Right cardiac atrium (tissue), 5 donors: ENCODE measurements at regions of chr2 and their contacts with region 1.

Region 1: GRCh38 chr2:70616168-70616694 is 62.6 kb upstream of the TGFA start:
- DNase-seq: no peak
- ATAC-seq: peak in 1 of 2 donors; percentile 29
- H3K4me3 ChIP-seq: no peak overlapping the region
- H3K27ac ChIP-seq: no peak overlapping the region
- H3K4me1 ChIP-seq: peaks cover 2% of the 10 kb centered on the region
- H3K27me3 ChIP-seq: no peaks in the 10 kb centered on the region

Region 2: GRCh38 chr2:70340921-70341765 is 275.1 kb before region 1 on chr2:
- intact Hi-C with region 1: loop called (anchors 2 to 10 kb)
- DNase-seq: no peak
- ATAC-seq: peak; percentile 54 to 61
- H3K4me3 ChIP-seq: no peak overlapping the region
- H3K27ac ChIP-seq: no peak overlapping the region
- H3K4me1 ChIP-seq: no peaks in the 10 kb centered on the region
- H3K27me3 ChIP-seq: peaks cover 3% of the 10 kb centered on the region

Region 3: DNA sequence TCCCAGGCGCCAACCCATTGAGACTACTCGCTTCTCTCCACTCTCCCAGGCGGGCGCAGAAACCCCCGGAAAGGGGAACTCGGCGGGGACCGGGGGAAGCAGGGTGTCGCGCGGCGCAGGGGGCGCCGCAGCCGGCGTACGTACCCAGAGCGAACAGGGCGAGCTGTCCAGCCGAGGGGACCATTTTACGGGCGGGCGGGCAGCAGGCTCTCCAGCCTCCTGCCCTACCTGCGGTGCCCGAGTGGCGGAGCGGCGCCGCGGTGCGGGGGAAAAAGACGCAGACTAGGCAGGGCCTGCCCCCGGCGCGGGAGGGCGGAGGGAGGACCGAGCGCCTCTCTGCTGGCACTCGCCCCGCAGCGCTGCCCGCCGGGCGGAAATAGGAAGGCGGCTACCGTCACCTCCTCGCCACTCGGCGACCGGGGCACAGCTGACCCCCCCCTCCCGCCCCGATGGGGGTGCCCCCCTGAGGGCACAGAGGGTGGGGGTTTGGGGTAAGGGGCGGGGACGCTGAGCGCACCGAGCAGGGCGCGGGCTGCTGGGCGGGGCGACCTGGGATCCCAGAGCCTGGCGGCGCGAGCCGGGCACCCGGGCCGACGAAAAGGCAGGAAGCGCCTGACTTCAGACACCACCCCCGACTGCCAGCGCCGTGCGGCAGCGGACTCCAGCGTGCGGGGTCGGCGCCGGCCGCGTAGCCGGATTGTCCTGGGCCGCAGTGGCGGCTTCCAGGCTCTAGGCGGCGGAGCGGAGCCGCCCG is 62.5 kb before region 1 on chr2 and contains the start of gene TGFA:
- intact Hi-C with region 1: loop called in 2 of 4 experiments (anchors 5 to 10 kb)
- DNase-seq: peak; percentile 66 to 87 (median 83)
- ATAC-seq: peak; percentile 92
- H3K4me3 ChIP-seq: peak within 1 kb of the TSS; percentile 86
- H3K27ac ChIP-seq: no peak within 1 kb of the TSS
- H3K4me1 ChIP-seq: no peaks in the 10 kb centered on the region
- H3K27me3 ChIP-seq: no peaks in the 10 kb centered on the region
- total RNA-seq, gene TGFA: 0.47 to 0.96 (median 0.58) TPM